ENCODE measurements at regions of chr12 and their contacts with region 1.

Region 1: GRCh38 chr12:61137677-61138414 is 1122.4 kb upstream of the USP15 start:
- DNase-seq: no peak
- H3K4me3 ChIP-seq: no peak overlapping the region
- CTCF ChIP-seq: no peak

Region 2: DNA sequence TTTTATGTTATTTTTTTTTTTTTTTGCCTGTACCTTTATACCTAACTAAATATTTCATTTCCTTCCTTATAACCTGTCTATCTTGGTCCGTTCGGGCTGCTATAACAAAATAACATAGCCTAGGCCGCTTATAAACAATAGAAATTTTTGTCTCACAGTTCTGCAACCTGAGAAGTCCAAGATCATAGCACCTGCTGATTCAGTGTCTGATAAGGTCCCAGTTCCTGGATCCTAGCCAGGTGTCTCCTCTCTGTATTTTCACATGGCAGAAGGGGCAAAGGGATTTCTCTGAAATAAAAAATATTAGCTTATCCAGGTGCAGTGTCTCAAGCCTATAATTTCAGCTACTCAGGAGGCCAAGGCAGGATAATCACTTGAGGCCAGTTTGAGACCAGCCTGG is 75.8 kb after region 1 on chr12:
- in situ Hi-C with region 1: loop called (anchors 5 kb)
- DNase-seq: no peak
- H3K4me3 ChIP-seq: no peak overlapping the region
- CTCF ChIP-seq: no peak